ENCODE measurements at regions of chr18 and their contacts with region 1.

Region 1: DNA sequence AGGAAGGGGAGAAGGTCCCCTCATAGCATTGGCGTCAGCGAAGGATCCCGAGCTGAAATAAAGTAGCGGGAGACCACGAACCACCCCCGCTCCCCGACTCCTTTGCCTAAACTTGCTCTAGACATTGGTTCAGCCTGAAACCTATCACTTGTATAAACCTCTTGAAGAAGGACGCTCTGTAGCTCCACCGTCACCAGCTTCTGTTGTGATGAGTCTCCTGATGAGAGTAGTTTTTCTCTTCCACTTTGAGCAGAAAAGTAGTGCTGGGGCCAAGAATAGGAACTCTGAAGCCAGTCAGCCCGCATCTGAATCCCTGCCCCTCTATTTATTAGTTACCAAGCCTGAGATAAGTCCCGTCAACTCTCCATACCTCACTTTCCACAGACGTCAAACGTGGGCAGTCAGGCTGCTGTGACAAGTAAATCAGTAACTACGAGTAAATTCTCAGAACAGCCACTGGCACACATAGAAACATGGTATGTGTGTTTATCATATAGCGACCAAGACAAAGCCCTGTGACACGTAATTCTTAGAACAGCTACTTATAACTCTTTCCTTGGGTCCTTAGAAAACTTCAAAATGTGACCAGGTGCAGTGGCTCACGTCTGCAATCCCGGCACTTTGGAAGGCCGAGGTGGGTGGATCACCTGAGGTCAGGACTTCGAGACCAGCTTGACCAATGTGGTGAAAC is 61.7 kb downstream of the CD226 start:
- DNase-seq: peak; percentile 79
- ATAC-seq: peak; percentile 71
- H3K4me3 Mint-ChIP-seq: peak overlapping the region; percentile 60
- H3K27ac Mint-ChIP-seq: peak overlapping the region; percentile 95
- H3K4me1 Mint-ChIP-seq: peaks cover 89% of the 10 kb centered on the region
- H3K27me3 Mint-ChIP-seq: no peaks in the 10 kb centered on the region

Region 2: DNA sequence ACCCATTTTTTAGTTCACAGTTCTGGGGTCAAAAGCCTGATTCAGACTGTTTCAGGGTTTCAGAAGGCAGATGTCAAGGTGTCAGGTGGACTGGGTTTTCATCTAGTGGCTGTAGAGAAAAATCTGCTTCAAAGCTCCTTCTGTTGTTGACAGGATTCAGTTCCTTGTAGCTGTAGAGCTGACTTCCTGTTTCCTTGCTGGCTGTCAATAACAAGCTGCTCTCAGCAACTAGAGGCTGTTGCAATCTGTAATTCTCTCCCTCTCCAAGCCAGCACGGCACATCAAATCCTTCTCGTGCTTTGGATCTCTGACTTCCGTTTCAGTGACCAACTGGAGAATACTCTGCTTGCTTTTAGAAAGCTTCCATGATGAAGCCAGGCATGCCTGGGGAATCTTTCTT is 305.9 kb before region 1 on chr18:
- CTCF ChIA-PET with region 1: no interaction called
- POLR2A ChIA-PET with region 1: no interaction called
- intact Hi-C with region 1: no loop called
- DNase-seq: no peak
- ATAC-seq: no peak
- H3K4me3 Mint-ChIP-seq: no peak overlapping the region
- H3K27ac Mint-ChIP-seq: peak overlapping the region; percentile 19
- H3K4me1 Mint-ChIP-seq: peaks cover 10% of the 10 kb centered on the region
- H3K27me3 Mint-ChIP-seq: no peaks in the 10 kb centered on the region

Region 3: GRCh38 chr18:69757733-69758132 is 128.3 kb before region 1 on chr18:
- CTCF ChIA-PET with region 1: no interaction called
- POLR2A ChIA-PET with region 1: no interaction called
- intact Hi-C with region 1: no loop called
- DNase-seq: no peak
- ATAC-seq: no peak
- H3K4me3 Mint-ChIP-seq: no peak overlapping the region
- H3K27ac Mint-ChIP-seq: no peak overlapping the region
- H3K4me1 Mint-ChIP-seq: peaks cover 27% of the 10 kb centered on the region
- H3K27me3 Mint-ChIP-seq: no peaks in the 10 kb centered on the region

Region 4: GRCh38 chr18:69874058-69874457 is 11.9 kb before region 1 on chr18:
- CTCF ChIA-PET with region 1: interaction called, 11 read pairs
- POLR2A ChIA-PET with region 1: no interaction called
- intact Hi-C with region 1: no loop called
- DNase-seq: no peak
- ATAC-seq: no peak
- H3K4me3 Mint-ChIP-seq: no peak overlapping the region
- H3K27ac Mint-ChIP-seq: peak overlapping the region; percentile 12
- H3K4me1 Mint-ChIP-seq: peaks cover 41% of the 10 kb centered on the region
- H3K27me3 Mint-ChIP-seq: no peaks in the 10 kb centered on the region

Region 5: GRCh38 chr18:69935319-69936190 is 49.6 kb after region 1 on chr18:
- CTCF ChIA-PET with region 1: interaction called, 6 read pairs
- POLR2A ChIA-PET with region 1: interaction called, 6 read pairs
- intact Hi-C with region 1: loop called (anchors 1 kb)
- DNase-seq: peak; percentile 93
- ATAC-seq: peak; percentile 92
- H3K4me3 Mint-ChIP-seq: no peak overlapping the region
- H3K27ac Mint-ChIP-seq: no peak overlapping the region
- H3K4me1 Mint-ChIP-seq: peaks cover 34% of the 10 kb centered on the region
- H3K27me3 Mint-ChIP-seq: no peaks in the 10 kb centered on the region

Region 6: DNA sequence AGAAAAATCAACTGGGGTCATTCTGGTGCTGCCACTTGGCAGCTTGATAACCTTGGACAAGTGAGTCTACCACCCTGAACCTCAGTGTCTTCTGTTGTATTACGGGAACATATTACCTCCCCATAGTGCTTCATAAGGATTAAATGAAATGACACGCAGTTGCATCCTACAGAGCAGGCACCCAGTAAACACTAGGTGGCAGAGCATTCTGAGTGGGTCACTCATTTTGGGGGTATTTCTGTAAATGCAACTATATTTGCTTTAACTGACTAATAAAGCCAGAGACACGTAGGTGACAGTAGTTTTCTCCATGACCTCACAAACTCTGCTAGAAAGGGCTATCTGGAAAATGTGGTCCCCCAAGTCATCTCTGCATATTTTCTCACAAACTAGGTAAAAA is 57.0 kb after region 1 on chr18:
- CTCF ChIA-PET with region 1: interaction called, 5 read pairs
- POLR2A ChIA-PET with region 1: interaction called, 9 read pairs
- intact Hi-C with region 1: loop called (anchors 1 kb)
- DNase-seq: peak; percentile 44
- ATAC-seq: peak; percentile 20
- H3K4me3 Mint-ChIP-seq: no peak overlapping the region
- H3K27ac Mint-ChIP-seq: peak overlapping the region; percentile 83
- H3K4me1 Mint-ChIP-seq: peaks cover 82% of the 10 kb centered on the region
- H3K27me3 Mint-ChIP-seq: no peaks in the 10 kb centered on the region

Region 7: DNA sequence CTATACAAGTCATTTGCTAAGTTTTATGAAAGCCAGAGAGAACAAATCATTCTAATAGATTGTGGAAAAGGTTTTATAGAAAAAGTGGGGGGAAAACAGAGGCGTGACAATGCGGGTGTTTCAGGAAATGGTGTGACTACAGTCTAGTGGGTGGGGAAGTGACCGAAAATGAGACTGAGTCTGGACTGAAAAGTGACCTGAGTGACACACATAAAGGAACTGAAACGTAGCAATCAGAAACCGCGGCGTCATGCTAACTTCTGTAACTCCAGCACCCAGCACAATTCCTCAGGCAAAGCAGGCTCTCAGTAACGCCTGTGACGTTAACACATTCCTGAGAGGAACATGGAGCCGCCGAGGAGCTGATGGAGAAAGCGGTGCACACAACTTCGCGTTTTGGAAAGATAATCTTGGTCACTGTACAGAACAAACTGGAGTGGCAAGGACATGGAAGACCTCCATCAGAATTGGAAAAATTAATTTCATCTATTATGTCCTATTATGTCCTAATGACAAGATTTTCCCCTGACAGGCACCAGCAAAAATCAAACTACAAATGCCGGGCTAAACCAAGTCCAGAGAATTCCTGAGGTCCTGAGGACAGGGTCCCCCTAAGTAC is 63.0 kb after region 1 on chr18:
- CTCF ChIA-PET with region 1: interaction called, 5 read pairs
- POLR2A ChIA-PET with region 1: interaction called, 9 read pairs
- intact Hi-C with region 1: loop called (anchors 1 kb)
- DNase-seq: peak; percentile 82
- ATAC-seq: peak; percentile 57
- H3K4me3 Mint-ChIP-seq: no peak overlapping the region
- H3K27ac Mint-ChIP-seq: no peak overlapping the region
- H3K4me1 Mint-ChIP-seq: peaks cover 50% of the 10 kb centered on the region
- H3K27me3 Mint-ChIP-seq: no peaks in the 10 kb centered on the region

Measured in activated CD4-positive, alpha-beta T cell treated with anti-CD3 and anti-CD28 coated beads for 36 hours (primary cell).